Sigmoid colon (tissue), 7 donors: ENCODE measurements at regions of chr15 and their contacts with region 1.

Region 1: GRCh38 chr15:98421419-98422129 is 226.8 kb upstream of the IGF1R start:
- DNase-seq: peak; percentile 87
- H3K4me3 ChIP-seq: peak overlapping the region in 3 of 4 donors; percentile 20 to 21 (median 20)
- H3K27ac ChIP-seq: no peak overlapping the region
- H3K4me1 ChIP-seq: peaks cover 0 to 57% (median 40%) of the 10 kb centered on the region in 4 donors
- H3K27me3 ChIP-seq: peaks cover 0 to 10% (median 0%) of the 10 kb centered on the region in 3 donors
- CTCF ChIP-seq: peak; percentile 90 to 100 (median 94)
- EP300 ChIP-seq: no peak
- POLR2A ChIP-seq: no peak

Region 2: GRCh38 chr15:98311566-98312188 is 109.9 kb before region 1 on chr15:
- intact Hi-C with region 1: loop called (anchors 1 kb)
- DNase-seq: peak; percentile 88
- H3K4me3 ChIP-seq: no peak overlapping the region
- H3K27ac ChIP-seq: no peak overlapping the region
- H3K4me1 ChIP-seq: peaks cover 0 to 4% (median 2%) of the 10 kb centered on the region in 4 donors
- H3K27me3 ChIP-seq: no peaks in the 10 kb centered on the region
- CTCF ChIP-seq: peak; percentile 55 to 84 (median 74)
- EP300 ChIP-seq: no peak
- POLR2A ChIP-seq: no peak

Region 3: DNA sequence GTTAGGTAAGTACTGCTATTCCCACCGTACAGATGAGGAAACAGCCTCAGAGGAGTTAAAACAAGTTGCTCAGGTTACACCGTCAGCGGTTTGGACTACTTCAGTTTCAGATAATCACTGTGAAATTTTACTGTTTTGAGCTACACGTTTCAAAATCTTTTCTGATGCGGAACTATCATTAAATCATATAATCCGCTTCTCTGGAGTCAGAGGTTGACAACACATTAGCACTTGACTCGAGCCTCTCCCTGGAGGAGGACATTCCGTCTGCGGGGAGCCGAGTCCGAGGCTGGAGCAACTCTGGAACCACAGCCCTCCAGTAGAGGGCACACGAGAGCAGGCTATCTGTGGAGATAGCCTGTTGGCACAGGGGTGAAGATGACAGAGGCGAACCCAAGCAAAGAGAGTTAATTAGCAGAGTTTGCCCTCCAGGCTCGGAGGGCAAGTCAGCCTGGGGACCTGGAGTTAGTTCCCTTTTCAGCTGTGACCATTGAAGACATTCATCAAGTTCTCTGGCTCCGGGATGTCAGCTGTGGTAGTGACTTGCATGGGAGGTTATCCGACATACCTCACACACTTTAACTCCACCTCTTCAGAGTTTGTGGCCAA is 358.0 kb after region 1 on chr15:
- intact Hi-C with region 1: no loop called
- DNase-seq: peak; percentile 86
- H3K4me3 ChIP-seq: no peak overlapping the region
- H3K27ac ChIP-seq: peak overlapping the region in 3 of 4 donors; percentile 16 to 58 (median 44)
- H3K4me1 ChIP-seq: peaks cover 0 to 47% (median 39%) of the 10 kb centered on the region in 4 donors
- H3K27me3 ChIP-seq: no peaks in the 10 kb centered on the region
- CTCF ChIP-seq: peak; percentile 49 to 90 (median 88)
- EP300 ChIP-seq: no peak
- POLR2A ChIP-seq: no peak